ENCODE measurements at regions of chr18 and their contacts with region 1.

Region 1: DNA sequence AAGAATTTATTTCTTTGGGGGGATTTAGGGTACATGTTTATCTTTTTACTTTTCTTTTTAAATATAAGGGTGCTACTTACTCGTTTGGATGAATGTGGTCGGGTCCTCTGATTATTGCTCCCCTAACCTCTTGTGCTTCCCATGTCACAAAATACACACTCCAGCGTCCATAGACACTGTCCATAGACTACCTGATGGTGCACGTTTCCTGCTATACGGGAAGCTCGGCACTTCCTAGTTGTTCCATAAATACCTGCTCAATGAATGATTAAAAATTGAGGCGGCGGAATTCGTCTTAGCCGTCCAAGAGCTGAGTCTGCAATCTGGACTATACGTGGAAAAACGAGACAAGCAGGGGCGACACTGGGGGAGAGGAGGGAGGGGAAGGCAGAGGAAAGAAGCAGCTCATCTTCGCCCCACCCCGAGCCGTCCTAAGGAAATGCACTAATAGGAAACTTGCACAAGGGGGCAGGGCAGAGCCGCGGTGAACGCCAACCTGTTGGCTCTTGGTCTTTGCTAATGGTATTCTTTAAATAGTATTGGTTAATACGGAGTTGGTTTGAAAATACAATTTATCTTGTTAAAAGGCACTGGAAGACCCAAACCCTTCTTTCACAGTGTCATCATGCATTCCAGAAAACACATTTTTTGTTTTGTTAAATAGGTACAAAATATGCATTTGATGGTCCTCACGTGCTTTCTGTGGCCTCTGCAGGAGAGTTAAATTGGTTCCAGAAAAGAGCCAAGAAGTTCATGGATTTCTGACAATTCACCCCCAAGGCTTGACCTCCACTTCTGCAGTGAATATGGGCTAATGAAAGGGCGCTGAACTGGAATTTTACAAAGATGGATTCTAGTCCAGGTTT is 73.0 kb upstream of the KCTD1 start:
- DNase-seq: peak; percentile 33 to 84
- H3K4me3 ChIP-seq: no peak overlapping the region
- H3K27ac ChIP-seq: no peak overlapping the region
- H3K4me1 ChIP-seq: no peaks in the 10 kb centered on the region
- H3K27me3 ChIP-seq: no peaks in the 10 kb centered on the region
- CTCF ChIP-seq: peak; percentile 79 to 85 (median 82)
- EP300 ChIP-seq: no peak
- POLR2A ChIP-seq: no peak
- RAD21 ChIP-seq: peak; percentile 92 to 94

Region 2: GRCh38 chr18:26383454-26384270 is 237.7 kb before region 1 on chr18:
- CTCF ChIA-PET with region 1: interaction called, 10 read pairs
- POLR2A ChIA-PET with region 1: no interaction called
- DNase-seq: no peak
- H3K4me3 ChIP-seq: no peak overlapping the region
- H3K27ac ChIP-seq: no peak overlapping the region
- H3K4me1 ChIP-seq: no peaks in the 10 kb centered on the region
- H3K27me3 ChIP-seq: no peaks in the 10 kb centered on the region
- CTCF ChIP-seq: peak in 2 of 3 experiments; percentile 51 to 67; a peak in 2 of 4 replicates
- EP300 ChIP-seq: no peak
- POLR2A ChIP-seq: no peak
- RAD21 ChIP-seq: peak; percentile 63 to 65

Region 3: DNA sequence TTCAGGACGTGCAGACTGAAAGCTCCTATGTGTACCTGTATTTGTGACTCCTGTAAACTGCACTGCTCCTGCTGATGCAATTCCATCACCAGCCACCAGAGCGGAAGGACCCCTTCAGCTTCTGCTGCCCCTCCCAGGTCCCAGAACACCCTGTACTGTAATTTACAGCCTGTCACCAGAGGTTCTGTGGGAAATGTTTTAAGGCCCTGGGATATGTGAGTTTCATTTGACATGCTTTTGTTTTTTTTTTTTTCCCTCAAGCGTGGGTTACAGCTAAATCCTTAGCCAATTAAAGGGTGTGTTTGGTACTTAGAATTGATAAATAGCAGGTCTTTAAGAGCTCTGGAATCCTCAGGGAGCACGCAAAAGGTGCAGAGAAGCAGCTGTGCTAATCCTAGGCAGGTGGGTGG is 152.5 kb before region 1 on chr18:
- CTCF ChIA-PET with region 1: interaction called, 11 read pairs
- POLR2A ChIA-PET with region 1: no interaction called
- DNase-seq: peak in 1 of 2 experiments; percentile 73
- H3K4me3 ChIP-seq: no peak overlapping the region
- H3K27ac ChIP-seq: no peak overlapping the region
- H3K4me1 ChIP-seq: peaks cover 0 to 3% (median 2%) of the 10 kb centered on the region in 4 experiments; a peak in 5 of 7 replicates
- H3K27me3 ChIP-seq: no peaks in the 10 kb centered on the region
- CTCF ChIP-seq: peak; percentile 75 to 86 (median 75)
- EP300 ChIP-seq: no peak
- POLR2A ChIP-seq: no peak
- RAD21 ChIP-seq: peak; percentile 51 to 63

Region 4: DNA sequence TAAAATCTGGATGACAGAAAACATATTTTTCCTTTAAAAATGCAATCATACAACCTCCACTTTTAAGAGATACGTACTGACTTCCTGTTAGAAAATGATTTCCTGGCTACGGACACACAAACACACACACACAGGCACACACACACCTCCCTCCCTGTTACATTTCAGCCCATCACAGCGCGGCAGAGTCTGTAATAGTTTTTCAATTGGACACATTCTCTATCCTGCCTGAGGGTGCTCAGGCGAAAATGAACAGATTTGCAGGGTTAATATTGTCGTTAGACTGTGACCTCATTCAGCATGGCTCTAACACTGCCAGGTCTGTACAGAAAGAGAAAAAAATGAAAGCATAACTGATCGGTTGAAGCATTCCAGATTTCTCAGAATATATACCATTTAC is 118.0 kb before region 1 on chr18:
- CTCF ChIA-PET with region 1: no interaction called
- POLR2A ChIA-PET with region 1: no interaction called
- DNase-seq: no peak
- H3K4me3 ChIP-seq: no peak overlapping the region
- H3K27ac ChIP-seq: no peak overlapping the region
- H3K4me1 ChIP-seq: no peaks in the 10 kb centered on the region
- H3K27me3 ChIP-seq: no peaks in the 10 kb centered on the region
- CTCF ChIP-seq: no peak
- EP300 ChIP-seq: no peak
- POLR2A ChIP-seq: no peak
- RAD21 ChIP-seq: no peak

Region 5: DNA sequence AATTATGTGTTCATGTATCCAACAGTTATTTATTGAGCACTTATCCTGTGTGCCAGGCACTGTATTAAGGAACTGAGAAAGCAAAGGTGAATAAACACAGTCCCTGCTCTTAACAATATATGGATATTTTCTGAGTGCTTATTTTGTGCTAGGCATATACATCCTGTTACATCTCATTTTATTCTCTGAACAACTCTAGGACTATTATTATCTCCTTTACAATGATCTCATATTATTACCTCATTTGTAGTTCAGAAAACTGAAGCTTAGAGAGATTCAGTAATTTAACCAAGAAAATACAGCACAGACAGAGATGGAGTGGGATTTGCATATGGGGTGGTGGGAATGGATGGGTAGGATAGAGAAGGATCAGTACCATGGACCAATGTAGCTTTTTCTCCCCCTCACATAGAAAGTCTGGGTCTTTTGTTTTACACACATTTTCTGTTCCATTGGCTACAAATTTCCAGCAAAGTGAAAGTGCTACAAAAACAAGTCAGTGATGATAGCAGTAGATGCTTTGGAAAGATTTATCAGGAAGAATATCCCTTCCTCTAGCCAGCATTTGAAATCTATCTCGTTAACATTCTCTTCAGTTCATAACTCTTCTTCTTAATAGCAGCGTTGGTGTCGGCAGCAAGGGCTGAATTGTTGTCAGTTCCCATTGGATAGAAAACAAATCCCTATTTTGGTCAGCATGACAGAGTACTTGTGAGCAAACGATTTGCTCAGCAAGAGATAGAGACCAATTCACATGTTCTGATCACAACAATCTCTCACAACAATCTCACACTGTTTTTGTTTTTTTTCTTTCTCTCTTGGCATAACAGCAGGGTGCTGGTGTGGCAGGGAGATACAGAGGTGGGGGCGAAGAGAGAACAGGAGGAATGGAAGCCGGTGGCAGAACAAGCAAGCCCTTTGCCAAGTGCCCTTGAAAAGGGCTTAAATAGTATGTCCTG is 29.2 kb after region 1 on chr18:
- CTCF ChIA-PET with region 1: interaction called, 17 read pairs
- POLR2A ChIA-PET with region 1: no interaction called
- DNase-seq: no peak
- H3K4me3 ChIP-seq: no peak overlapping the region
- H3K27ac ChIP-seq: no peak overlapping the region
- H3K4me1 ChIP-seq: peaks cover 0 to 12% (median 5%) of the 10 kb centered on the region in 4 experiments; a peak in 4 of 7 replicates
- H3K27me3 ChIP-seq: peaks cover 0 to 12% (median 9%) of the 10 kb centered on the region in 4 experiments; a peak in 6 of 7 replicates
- CTCF ChIP-seq: no peak
- EP300 ChIP-seq: no peak
- POLR2A ChIP-seq: no peak
- RAD21 ChIP-seq: no peak

Region 6: GRCh38 chr18:26777351-26778053 is 156.1 kb after region 1 on chr18:
- CTCF ChIA-PET with region 1: interaction called, 13 read pairs
- POLR2A ChIA-PET with region 1: no interaction called
- DNase-seq: no peak
- H3K4me3 ChIP-seq: no peak overlapping the region
- H3K27ac ChIP-seq: no peak overlapping the region
- H3K4me1 ChIP-seq: peaks cover 0 to 23% (median 2%) of the 10 kb centered on the region in 4 experiments; a peak in 6 of 7 replicates
- H3K27me3 ChIP-seq: no peaks in the 10 kb centered on the region
- CTCF ChIP-seq: no peak
- EP300 ChIP-seq: no peak
- POLR2A ChIP-seq: no peak
- RAD21 ChIP-seq: no peak

Measured in H1 (cell line).